AG04449 (cell line): ENCODE measurements at regions of chr10 and their contacts with region 1.

Region 1: DNA sequence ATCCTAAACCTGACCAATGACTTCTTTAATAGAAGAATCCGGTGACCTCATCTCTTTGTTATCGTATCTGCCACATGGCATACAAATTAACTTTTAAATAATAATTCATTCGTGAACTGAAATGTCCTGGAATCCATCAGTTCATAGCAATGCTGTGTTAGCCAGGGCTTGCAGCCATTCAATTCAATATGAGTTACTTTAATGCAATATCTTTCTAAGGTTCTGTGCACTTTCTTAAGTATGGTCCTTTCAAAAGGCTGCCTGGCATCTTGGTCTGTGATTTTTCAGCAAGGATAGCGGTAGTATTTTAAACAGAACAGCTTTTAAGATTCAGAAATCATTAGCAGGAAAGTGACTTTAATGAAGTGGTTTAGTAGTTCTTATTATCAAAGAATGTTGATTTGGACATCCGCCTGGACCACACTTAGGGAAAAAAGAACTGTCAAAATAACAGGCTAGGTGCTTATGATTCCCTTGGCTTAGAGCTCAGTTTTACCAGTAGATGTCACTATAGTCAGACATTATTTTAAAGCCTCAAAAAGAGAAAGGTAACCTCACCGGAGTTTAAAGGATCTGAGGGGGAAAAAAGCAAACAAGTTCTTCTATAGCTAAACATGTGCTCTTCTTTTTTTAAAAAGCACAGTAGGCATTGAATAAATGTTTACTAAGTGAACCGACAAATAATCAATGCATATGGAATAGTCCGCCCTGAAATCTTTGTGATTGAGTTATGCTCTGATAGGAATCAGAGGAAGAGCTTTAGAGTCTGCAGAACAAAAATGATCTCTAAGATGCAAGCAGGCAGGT is 22.7 kb downstream of the SLC35G1 start:
- DNase-seq: no peak
- H3K4me3 ChIP-seq: no peak overlapping the region
- CTCF ChIP-seq: peak; percentile 31

Region 2: GRCh38 chr10:93893646-93894515 is 22.6 kb before region 1 on chr10 and contains the start of gene SLC35G1:
- CTCF ChIA-PET with region 1: interaction called, 16 read pairs
- POLR2A ChIA-PET with region 1: interaction called, 6 read pairs
- DNase-seq: no peak
- H3K4me3 ChIP-seq: peak within 1 kb of the TSS; percentile 84
- CTCF ChIP-seq: no peak

Region 3: DNA sequence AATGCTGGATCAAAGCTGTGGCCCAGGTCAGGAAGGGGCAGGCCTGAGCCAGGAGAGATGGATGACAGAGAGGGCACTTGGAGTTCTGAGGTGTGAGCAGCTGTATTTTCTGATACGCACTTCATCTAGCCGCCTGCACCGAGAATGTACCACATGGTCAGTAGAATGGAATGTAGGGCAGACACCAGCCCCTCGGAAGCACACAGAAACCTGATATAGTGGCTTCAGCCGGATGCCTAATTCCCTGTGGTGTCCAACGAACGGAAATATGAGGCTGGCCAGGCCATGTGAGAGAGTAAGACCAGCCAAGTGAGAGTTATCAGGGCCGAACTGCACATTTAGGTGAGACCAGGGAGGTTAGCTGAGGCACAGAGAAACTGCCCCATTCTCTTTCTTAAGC is 30.6 kb after region 1 on chr10:
- CTCF ChIA-PET with region 1: interaction called, 14 read pairs
- POLR2A ChIA-PET with region 1: no interaction called
- DNase-seq: peak; percentile 40
- H3K4me3 ChIP-seq: no peak overlapping the region
- CTCF ChIP-seq: no peak

Region 4: DNA sequence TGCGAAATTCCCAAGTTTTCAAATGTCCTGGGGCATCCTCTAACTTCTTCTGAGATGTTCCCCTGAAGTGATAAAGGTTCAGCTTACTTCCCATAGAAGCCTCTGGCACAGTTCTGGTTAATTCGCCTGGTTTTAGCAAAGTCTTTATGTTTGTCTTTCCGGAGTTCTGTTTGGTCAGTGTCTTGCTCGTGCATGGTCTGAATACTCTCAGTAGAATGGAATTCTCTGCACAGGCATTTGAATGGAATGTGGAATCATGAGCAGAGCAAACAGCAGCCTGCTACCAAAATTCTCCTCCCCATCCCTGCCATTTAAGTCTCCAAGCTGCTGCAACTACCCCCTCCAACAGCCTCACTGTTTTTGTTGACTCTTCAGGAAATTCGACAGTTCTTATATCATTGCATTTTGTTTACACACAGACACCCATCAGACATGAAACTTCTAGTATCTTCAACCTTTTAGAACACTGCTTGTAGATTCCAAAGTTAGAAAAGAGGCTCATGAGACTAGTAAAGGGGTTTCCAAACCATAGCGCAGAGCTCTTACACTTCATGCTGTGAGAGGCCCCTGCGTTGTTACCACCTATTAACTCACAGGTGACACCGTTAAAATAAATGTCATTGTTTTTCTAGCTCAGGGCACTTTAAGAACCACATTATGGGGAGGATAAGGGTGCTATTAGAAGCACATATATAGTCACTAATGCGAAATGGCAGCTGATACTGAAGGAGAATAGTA is 207.0 kb after region 1 on chr10:
- CTCF ChIA-PET with region 1: interaction called, 10 read pairs
- POLR2A ChIA-PET with region 1: no interaction called
- DNase-seq: peak; percentile 79
- H3K4me3 ChIP-seq: no peak overlapping the region
- CTCF ChIP-seq: no peak

Region 5: DNA sequence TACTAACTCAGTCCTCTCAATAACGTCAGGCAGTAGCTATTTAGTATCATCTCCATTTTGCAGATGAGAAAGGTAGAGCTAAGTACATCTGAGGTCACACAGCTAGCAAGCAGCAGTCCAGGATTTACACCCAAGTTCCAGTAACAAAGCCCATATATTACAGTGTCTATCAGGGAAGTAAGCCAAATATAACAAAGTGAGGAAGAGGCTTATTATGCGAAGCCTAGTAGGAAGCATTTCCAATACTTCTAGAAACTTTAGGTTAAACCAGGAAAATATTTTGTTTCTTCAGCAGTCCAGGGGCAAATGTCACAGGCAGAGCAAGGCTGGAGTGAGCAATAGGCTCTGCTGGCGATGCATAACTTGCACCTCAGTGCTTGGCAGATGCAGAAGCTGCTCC is 392.4 kb after region 1 on chr10:
- CTCF ChIA-PET with region 1: interaction called, 10 read pairs
- POLR2A ChIA-PET with region 1: no interaction called
- DNase-seq: no peak
- H3K4me3 ChIP-seq: no peak overlapping the region
- CTCF ChIP-seq: no peak